Ascending aorta (tissue), 2 donors: ENCODE measurements at regions of chr3 and their contacts with region 1.

Region 1: DNA sequence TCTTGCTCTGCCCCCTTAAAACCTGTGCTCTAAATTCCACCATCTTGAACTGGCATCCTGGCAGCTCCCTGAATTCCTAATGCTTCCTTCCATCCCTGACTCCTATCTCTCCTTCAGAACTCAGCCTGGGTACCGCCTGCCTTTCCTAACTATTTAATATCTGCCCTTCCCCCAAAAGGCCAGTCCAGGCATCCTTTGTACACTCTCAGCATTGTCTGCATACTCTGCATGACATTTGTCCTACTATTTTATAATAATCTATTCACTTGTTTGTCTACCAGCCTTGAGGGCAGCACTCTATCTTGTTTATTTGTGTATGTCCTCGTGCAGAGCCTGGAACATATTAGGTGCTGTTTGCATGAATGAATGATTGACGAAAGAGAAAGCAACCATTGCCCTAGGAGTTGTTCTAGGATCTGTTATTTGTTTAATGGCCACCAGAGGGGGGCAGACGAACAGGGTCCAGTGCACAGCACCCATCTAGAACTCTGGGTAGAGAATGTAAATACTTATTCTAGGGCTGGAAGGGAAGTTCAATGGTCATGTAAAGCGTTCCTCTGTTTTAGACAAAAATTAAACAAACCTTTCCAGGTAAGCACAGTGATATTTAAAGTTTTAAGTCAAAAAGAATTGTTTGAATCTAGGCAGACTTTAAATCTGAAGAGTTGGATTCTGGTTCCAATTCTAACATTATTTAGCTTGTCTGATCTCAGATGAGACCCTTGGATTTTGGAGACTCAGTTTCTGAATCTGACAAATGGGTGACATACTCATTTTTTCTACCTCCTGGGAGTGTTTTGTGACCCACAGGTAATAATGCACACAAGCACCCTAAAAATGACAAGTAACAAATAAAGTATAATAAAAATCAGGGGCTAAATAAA is 125.8 kb upstream of the GALNT15 start:
- DNase-seq: no peak
- H3K4me3 ChIP-seq: peak overlapping the region in 1 of 2 donors; percentile 46
- H3K27ac ChIP-seq: no peak overlapping the region
- H3K4me1 ChIP-seq: peaks cover 0 to 3% of the 10 kb centered on the region in 2 donors
- H3K27me3 ChIP-seq: no peaks in the 10 kb centered on the region
- CTCF ChIP-seq: peak; percentile 72 to 85 (median 82)

Region 2: DNA sequence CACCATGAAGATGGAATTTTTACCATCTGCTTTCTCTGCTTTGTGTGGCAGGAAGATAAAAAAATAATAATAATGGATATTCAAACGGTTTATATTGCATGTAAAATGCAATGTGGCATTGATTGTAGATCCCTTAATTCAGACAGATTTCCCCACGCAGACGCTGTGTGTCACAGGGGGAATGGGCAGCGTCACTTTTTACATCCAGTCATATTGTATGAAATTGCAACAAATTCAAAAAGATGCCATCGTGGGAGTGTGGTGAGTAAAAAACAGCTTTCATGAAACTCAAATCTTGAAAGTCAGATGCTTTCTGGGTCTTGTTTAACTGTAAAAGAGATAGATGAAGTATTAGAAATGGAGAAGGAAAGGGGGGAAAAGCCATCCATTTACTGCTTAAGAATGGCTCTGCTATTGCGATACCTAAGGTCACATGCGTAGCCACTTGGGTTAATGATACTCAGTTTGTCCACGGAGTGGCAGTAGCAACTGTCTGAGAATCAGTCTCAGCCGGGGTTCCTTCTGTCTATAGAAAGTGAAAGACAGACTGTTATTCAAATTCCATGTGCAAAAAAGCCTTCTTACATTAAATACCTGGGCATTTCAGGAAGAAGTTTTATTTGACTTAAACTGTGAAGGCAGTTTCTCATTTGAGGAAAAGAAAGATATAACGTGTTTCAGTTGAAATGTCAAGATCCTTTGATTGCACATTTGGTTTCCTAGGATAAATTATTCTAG is 418.6 kb before region 1 on chr3:
- intact Hi-C with region 1: loop called (anchors 5 kb)
- DNase-seq: peak in 1 of 2 donors; percentile 78
- H3K4me3 ChIP-seq: peak overlapping the region; percentile 47 to 59
- H3K27ac ChIP-seq: peak overlapping the region in 1 of 2 donors; percentile 10
- H3K4me1 ChIP-seq: peaks cover 9 to 17% of the 10 kb centered on the region in 2 donors
- H3K27me3 ChIP-seq: no peaks in the 10 kb centered on the region
- CTCF ChIP-seq: peak; percentile 72 to 81 (median 78)

Region 3: GRCh38 chr3:15815696-15816095 is 233.0 kb before region 1 on chr3:
- intact Hi-C with region 1: loop called (anchors 5 kb)
- DNase-seq: no peak
- H3K4me3 ChIP-seq: no peak overlapping the region
- H3K27ac ChIP-seq: no peak overlapping the region
- H3K4me1 ChIP-seq: no peaks in the 10 kb centered on the region
- H3K27me3 ChIP-seq: no peaks in the 10 kb centered on the region
- CTCF ChIP-seq: peak; percentile 20 to 49 (median 28)